HepG2 (cell line): ENCODE measurements at regions of chr2 and their contacts with region 1.

Region 1: DNA sequence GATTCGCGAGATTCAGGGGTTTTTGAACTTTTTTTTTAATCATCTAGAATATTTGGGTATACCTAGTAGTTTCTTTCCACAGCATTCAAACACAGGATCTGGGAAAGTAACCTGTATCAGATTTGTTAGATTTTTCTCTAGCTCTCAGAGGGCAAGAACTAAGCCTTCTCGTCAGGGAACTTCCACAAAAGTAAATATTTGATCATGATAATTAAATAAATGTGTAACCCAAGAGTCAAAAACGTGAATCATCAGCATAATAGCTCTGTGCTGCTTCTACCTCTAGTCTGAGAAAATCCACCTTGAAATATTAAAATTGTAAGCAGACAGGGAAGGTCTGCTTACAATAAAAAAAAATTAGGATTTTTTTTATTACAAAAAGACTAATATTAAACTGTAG is 225.7 kb upstream of the SPOPL start:
- DNase-seq: peak; percentile 88
- ATAC-seq: peak; percentile 87
- H3K4me3 ChIP-seq: peak overlapping the region in 2 of 3 experiments; percentile 23 to 43; a peak in 3 of 6 replicates
- H3K27ac ChIP-seq: peak overlapping the region; percentile 53
- H3K4me1 ChIP-seq: peaks cover 70% of the 10 kb centered on the region
- H3K27me3 ChIP-seq: no peaks in the 10 kb centered on the region
- CTCF ChIP-seq: no peak
- EP300 ChIP-seq: peak in 1 of 2 experiments; percentile 67; a peak in 2 of 4 replicates
- POLR2A ChIP-seq: no peak
- RAD21 ChIP-seq: no peak

Region 2: GRCh38 chr2:138180692-138181386 is 95.0 kb before region 1 on chr2:
- CTCF ChIA-PET with region 1: no interaction called
- POLR2A ChIA-PET with region 1: no interaction called
- in situ Hi-C with region 1: no loop called
- intact Hi-C with region 1: loop called (anchors 5 kb)
- DNase-seq: peak; percentile 23
- ATAC-seq: peak; percentile 81
- H3K4me3 ChIP-seq: no peak overlapping the region
- H3K27ac ChIP-seq: no peak overlapping the region
- H3K4me1 ChIP-seq: peaks cover 35% of the 10 kb centered on the region
- H3K27me3 ChIP-seq: no peaks in the 10 kb centered on the region
- CTCF ChIP-seq: peak; percentile 55
- EP300 ChIP-seq: no peak
- POLR2A ChIP-seq: no peak
- RAD21 ChIP-seq: peak; percentile 19; the same call in 1 of the 2 replicates

Region 3: GRCh38 chr2:138192096-138192495 is 83.8 kb before region 1 on chr2:
- CTCF ChIA-PET with region 1: no interaction called
- POLR2A ChIA-PET with region 1: no interaction called
- in situ Hi-C with region 1: no loop called
- intact Hi-C with region 1: no loop called
- DNase-seq: no peak
- ATAC-seq: no peak
- H3K4me3 ChIP-seq: no peak overlapping the region
- H3K27ac ChIP-seq: no peak overlapping the region
- H3K4me1 ChIP-seq: peaks cover 12% of the 10 kb centered on the region
- H3K27me3 ChIP-seq: no peaks in the 10 kb centered on the region
- CTCF ChIP-seq: no peak
- EP300 ChIP-seq: no peak
- POLR2A ChIP-seq: no peak
- RAD21 ChIP-seq: no peak